ENCODE measurements at regions of chr7 and their contacts with region 1.

Region 1: GRCh38 chr7:123797673-123798527 is 47.1 kb upstream of the HYAL4 start:
- DNase-seq: peak; percentile 95
- H3K4me3 Mint-ChIP-seq: peak overlapping the region; percentile 63
- H3K27ac Mint-ChIP-seq: peak overlapping the region; percentile 94
- H3K4me1 Mint-ChIP-seq: peaks cover 12% of the 10 kb centered on the region
- H3K27me3 Mint-ChIP-seq: no peaks in the 10 kb centered on the region
- CTCF ChIP-seq: peak; percentile 51

Region 2: DNA sequence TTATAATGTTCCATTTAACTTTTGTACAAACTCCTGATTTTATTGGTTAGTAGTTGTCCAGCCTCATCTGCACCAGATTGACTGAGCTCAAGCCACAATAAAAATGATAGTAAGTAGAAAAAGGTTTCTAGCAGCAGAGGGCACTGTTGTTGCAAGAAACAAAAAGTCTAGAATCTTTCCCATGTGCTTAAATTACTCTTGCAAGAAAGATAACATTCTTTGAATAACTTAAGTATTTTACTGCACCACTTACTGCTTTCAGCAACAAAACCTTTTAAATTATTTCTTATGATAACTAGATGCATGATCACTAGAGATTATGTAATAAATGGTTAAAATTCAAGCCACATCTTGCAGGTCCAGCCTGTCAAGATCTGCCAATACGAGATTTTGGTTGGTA is 115.2 kb before region 1 on chr7:
- CTCF ChIA-PET with region 1: interaction called, 12 read pairs
- POLR2A ChIA-PET with region 1: interaction called, 4 read pairs
- intact Hi-C with region 1: loop called (anchors 5 kb)
- DNase-seq: peak; percentile 58
- H3K4me3 Mint-ChIP-seq: no peak overlapping the region
- H3K27ac Mint-ChIP-seq: no peak overlapping the region
- H3K4me1 Mint-ChIP-seq: no peaks in the 10 kb centered on the region
- H3K27me3 Mint-ChIP-seq: no peaks in the 10 kb centered on the region
- CTCF ChIP-seq: peak; percentile 46

Region 3: GRCh38 chr7:123784263-123784662 is 13.6 kb before region 1 on chr7:
- CTCF ChIA-PET with region 1: interaction called, 22 read pairs
- POLR2A ChIA-PET with region 1: interaction called, 5 read pairs
- intact Hi-C with region 1: no loop called
- DNase-seq: no peak
- H3K4me3 Mint-ChIP-seq: no peak overlapping the region
- H3K27ac Mint-ChIP-seq: no peak overlapping the region
- H3K4me1 Mint-ChIP-seq: no peaks in the 10 kb centered on the region
- H3K27me3 Mint-ChIP-seq: no peaks in the 10 kb centered on the region
- CTCF ChIP-seq: no peak

Region 4: DNA sequence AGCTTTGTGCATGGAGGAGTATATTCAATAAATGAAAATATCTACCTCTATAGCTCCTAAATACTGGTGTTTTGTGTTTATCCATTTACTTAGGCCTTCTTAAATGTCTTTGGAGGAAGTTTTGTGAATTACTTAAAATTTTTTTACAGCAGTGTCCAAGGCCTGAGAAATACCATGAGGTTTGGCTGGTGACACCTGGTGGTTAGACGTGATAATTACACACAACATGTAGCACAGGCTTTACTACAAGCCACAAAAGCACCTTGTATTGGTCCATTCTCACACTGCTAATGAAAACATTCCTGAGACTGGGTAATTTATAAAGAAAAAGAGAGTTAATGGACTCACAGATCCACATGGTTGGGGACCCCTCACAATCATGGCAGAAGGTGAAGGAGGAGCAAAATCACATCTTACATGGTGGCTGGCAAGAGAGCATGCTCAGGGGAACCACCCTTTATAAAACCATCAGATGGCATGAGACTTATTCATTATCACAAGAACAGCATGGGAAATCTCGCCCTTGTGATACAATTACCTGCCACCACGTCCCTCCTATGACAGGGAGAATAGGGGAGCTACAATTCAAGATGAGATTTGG is 67.7 kb after region 1 on chr7:
- CTCF ChIA-PET with region 1: interaction called, 146 read pairs
- POLR2A ChIA-PET with region 1: interaction called, 58 read pairs
- intact Hi-C with region 1: loop called (anchors 1 kb)
- DNase-seq: peak; percentile 79
- H3K4me3 Mint-ChIP-seq: no peak overlapping the region
- H3K27ac Mint-ChIP-seq: no peak overlapping the region
- H3K4me1 Mint-ChIP-seq: peaks cover 11% of the 10 kb centered on the region
- H3K27me3 Mint-ChIP-seq: no peaks in the 10 kb centered on the region
- CTCF ChIP-seq: peak; percentile 59

Region 5: GRCh38 chr7:124101173-124101768 is 303.4 kb after region 1 on chr7:
- CTCF ChIA-PET with region 1: no interaction called
- POLR2A ChIA-PET with region 1: no interaction called
- intact Hi-C with region 1: loop called (anchors 2 kb)
- DNase-seq: peak; percentile 63
- H3K4me3 Mint-ChIP-seq: no peak overlapping the region
- H3K27ac Mint-ChIP-seq: no peak overlapping the region
- H3K4me1 Mint-ChIP-seq: peaks cover 9% of the 10 kb centered on the region
- H3K27me3 Mint-ChIP-seq: no peaks in the 10 kb centered on the region
- CTCF ChIP-seq: peak; percentile 54

Region 6: DNA sequence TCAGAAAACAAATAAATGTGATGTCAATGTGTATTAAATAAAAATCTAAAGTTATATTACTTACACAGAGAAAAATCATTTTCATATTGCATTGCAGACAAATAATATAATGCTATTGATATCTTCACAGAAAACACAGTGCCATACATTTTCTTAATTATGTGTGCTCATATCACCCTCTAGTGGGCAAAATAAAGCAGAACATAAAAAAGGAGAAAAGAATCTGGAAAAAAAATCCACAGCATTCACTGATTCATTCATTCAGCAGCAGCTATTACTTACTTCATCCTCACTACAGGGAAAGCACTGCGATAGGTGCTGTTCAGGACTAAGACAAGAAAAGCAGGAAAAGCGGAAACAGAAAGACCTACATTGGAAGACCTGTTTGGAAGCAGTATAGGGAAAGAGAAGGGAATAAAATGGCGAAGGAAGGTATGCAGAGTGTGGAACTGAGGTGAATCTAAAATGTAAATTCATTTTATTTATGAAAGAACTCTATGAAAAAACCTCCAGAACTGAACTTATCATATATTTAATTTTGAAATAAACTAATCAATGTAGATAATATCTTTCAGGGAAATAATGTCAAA is 1058.5 kb after region 1 on chr7:
- CTCF ChIA-PET with region 1: no interaction called
- POLR2A ChIA-PET with region 1: no interaction called
- intact Hi-C with region 1: loop called (anchors 10 kb)
- DNase-seq: peak; percentile 52
- H3K4me3 Mint-ChIP-seq: no peak overlapping the region
- H3K27ac Mint-ChIP-seq: no peak overlapping the region
- H3K4me1 Mint-ChIP-seq: peaks cover 6% of the 10 kb centered on the region
- H3K27me3 Mint-ChIP-seq: no peaks in the 10 kb centered on the region
- CTCF ChIP-seq: peak; percentile 47

Measured in MCF 10A (cell line).